ENCODE measurements at regions of chr1 and their contacts with region 1.

Region 1: DNA sequence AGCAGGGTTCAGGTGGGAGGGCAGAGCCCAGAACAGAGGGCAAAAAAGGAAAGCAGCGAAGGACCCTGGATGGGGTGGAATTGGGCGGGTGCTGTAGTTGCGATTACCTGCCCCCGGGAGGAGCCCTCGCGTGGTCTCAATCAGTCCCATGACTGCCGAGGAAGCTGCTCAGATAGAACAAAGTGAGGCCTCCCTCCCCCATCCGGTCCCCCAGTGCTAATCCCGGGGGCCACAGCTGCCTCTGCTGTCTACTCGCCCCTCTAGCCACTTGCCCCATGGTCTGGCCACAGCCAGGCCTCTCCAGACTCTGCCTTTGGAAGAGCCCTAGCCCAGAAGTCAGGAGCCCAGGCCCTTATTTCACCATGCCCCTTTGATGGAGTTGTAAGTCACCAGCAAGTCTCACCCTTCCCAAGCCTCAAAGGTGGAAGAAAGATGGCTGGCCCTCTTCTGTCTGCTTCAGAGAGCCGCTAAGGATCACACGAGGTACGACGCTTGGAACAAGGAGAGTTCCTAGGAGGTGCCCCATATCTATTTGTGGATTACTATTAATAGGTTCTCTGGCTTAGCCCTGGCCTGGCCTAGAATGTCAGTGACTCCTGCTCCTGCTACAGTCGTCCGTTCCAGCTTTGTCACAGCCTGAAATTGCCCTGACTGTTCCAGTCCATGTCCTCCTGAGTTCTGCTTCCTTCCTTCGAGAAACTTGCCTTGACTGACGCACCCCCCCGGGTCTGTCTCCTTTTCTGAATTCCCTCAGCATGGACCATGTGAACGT is 16.4 kb downstream of the ECHDC2 start:
- DNase-seq: peak; percentile 38 to 81
- H3K4me3 ChIP-seq: no peak overlapping the region
- H3K27ac ChIP-seq: no peak overlapping the region
- H3K4me1 ChIP-seq: peaks cover 0 to 10% (median 3%) of the 10 kb centered on the region in 4 experiments; a peak in 5 of 7 replicates
- H3K27me3 ChIP-seq: no peaks in the 10 kb centered on the region
- CTCF ChIP-seq: peak; percentile 68 to 77 (median 72)
- EP300 ChIP-seq: no peak
- POLR2A ChIP-seq: no peak
- RAD21 ChIP-seq: peak; percentile 67 to 70

Region 2: GRCh38 chr1:52920791-52921291 is 15.7 kb after region 1 on chr1:
- CTCF ChIA-PET with region 1: interaction called, 39 read pairs
- POLR2A ChIA-PET with region 1: no interaction called
- DNase-seq: no peak
- H3K4me3 ChIP-seq: peak overlapping the region; percentile 56 to 73 (median 70)
- H3K27ac ChIP-seq: no peak overlapping the region
- H3K4me1 ChIP-seq: peaks cover 0 to 3% (median 0%) of the 10 kb centered on the region in 4 experiments; a peak in 3 of 7 replicates
- H3K27me3 ChIP-seq: peaks cover 4 to 31% (median 19%) of the 10 kb centered on the region in 4 experiments
- CTCF ChIP-seq: no peak
- EP300 ChIP-seq: no peak
- POLR2A ChIP-seq: no peak
- RAD21 ChIP-seq: no peak

Region 3: DNA sequence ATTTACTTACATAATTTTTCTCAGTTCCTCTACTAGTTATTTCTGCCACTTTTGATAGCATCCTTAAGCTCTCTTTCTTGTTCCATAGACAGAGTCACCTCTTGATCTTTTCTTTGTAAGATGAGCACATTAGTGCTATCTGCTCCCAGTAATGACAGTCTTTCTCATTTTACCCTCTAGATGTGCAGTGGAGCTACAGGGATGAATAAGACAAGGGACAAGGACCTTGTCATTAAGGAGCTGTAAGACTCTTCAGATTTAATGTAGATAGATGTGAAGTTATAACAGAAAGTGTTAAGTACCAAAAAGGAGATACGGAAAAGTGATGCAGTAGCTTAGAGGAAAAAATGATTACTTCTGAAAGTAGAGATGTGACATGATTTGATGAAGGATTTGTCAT is 42.4 kb after region 1 on chr1:
- CTCF ChIA-PET with region 1: no interaction called
- POLR2A ChIA-PET with region 1: no interaction called
- DNase-seq: no peak
- H3K4me3 ChIP-seq: no peak overlapping the region
- H3K27ac ChIP-seq: no peak overlapping the region
- H3K4me1 ChIP-seq: no peaks in the 10 kb centered on the region
- H3K27me3 ChIP-seq: no peaks in the 10 kb centered on the region
- CTCF ChIP-seq: no peak
- EP300 ChIP-seq: no peak
- POLR2A ChIP-seq: no peak
- RAD21 ChIP-seq: no peak

Region 4: GRCh38 chr1:53031727-53032126 is 126.6 kb after region 1 on chr1:
- CTCF ChIA-PET with region 1: no interaction called
- POLR2A ChIA-PET with region 1: no interaction called
- DNase-seq: no peak
- H3K4me3 ChIP-seq: no peak overlapping the region
- H3K27ac ChIP-seq: no peak overlapping the region
- H3K4me1 ChIP-seq: no peaks in the 10 kb centered on the region
- H3K27me3 ChIP-seq: no peaks in the 10 kb centered on the region
- CTCF ChIP-seq: no peak
- EP300 ChIP-seq: no peak
- POLR2A ChIP-seq: no peak
- RAD21 ChIP-seq: no peak

Measured in H1 (cell line).